GM23248 (cell line): ENCODE measurements at regions of chr2 and their contacts with region 1.

Region 1: GRCh38 chr2:191501561-191502168 is 176.3 kb upstream of the NABP1 start:
- DNase-seq: peak; percentile 68
- H3K4me3 ChIP-seq: no peak overlapping the region
- H3K27ac ChIP-seq: no peak overlapping the region
- H3K4me1 ChIP-seq: peaks cover 9% of the 10 kb centered on the region
- H3K27me3 ChIP-seq: no peaks in the 10 kb centered on the region

Region 2: DNA sequence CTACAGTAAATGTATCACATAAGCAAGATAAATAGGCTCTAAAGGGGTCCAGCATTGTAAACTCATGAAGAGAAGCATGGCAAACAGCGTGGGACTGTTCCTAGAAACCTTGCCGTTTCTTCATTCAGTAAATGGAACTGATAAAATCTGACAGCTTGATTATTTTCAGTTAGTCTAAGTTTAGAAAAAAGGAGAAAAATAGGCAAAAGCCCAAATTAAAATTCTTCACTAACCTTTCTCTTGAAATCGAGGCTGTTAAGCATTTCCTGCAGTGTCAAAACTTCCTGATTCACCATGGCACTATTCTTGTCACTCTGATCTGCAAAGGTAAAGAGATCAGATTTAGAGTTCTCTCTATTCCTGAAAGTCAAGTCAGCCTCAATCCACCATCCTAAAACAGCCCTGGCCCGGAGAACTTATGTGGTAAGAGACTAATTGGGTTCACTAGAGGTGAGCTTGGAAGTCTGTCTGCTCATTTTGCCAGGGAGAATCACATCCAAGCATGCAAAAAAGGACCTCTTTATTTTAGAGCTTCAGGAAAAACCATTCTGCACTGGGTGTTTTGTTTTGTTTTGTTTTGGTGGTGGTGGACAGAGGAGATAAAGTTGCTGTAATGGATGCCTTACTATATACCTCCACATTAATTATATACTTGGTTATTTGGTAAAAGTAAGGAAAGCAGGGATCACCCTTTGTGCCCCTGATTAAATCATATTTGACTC is 435.3 kb before region 1 on chr2:
- in situ Hi-C with region 1: loop called (anchors 10 kb)
- DNase-seq: no peak
- H3K4me3 ChIP-seq: no peak overlapping the region
- H3K27ac ChIP-seq: no peak overlapping the region
- H3K4me1 ChIP-seq: peaks cover 10% of the 10 kb centered on the region
- H3K27me3 ChIP-seq: no peaks in the 10 kb centered on the region

Region 3: GRCh38 chr2:191165176-191165643 is 336.5 kb before region 1 on chr2:
- in situ Hi-C with region 1: loop called (anchors 10 kb)
- DNase-seq: peak; percentile 77
- H3K4me3 ChIP-seq: no peak overlapping the region
- H3K27ac ChIP-seq: 0 out of 2 replicates have a peak overlapping the region, but pooled peaks have one; percentile 18
- H3K4me1 ChIP-seq: peaks cover 50% of the 10 kb centered on the region
- H3K27me3 ChIP-seq: no peaks in the 10 kb centered on the region

Region 4: DNA sequence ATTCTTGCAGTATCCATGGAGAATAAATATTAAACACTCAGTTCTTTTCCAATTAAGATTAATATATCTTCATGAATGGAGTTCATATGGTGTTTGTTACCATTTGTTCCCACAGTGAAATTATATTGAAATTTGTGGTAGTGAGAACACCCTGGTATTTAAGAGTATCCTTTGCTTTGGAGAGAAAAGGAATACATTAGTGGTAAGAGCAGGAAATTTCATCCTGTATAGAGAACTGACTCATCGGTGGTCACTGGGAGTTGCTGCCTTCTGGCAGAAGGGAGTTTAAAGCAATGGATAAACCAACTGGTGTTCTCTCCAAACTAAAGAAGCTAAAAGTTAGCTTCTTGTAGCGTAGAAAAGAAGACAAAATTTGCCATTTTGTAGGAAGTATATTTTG is 149.1 kb before region 1 on chr2:
- in situ Hi-C with region 1: no loop called
- DNase-seq: peak; percentile 88
- H3K4me3 ChIP-seq: no peak overlapping the region; the same call in 1 of the 2 replicates
- H3K27ac ChIP-seq: peak overlapping the region; percentile 81
- H3K4me1 ChIP-seq: peaks cover 33% of the 10 kb centered on the region
- H3K27me3 ChIP-seq: no peaks in the 10 kb centered on the region